Caco-2 (cell line): ENCODE measurements at regions of chr20 and their contacts with region 1.

Region 1: GRCh38 chr20:62900052-62900691 is 26.1 kb downstream of the DIDO1 start:
- DNase-seq: peak; percentile 87 to 92
- H3K4me3 ChIP-seq: no peak overlapping the region
- H3K4me3 Mint-ChIP-seq: peak overlapping the region; percentile 28
- H3K27ac Mint-ChIP-seq: peak overlapping the region; percentile 82
- H3K4me1 ChIP-seq: peaks cover 13% of the 10 kb centered on the region
- H3K4me1 Mint-ChIP-seq: peaks cover 28% of the 10 kb centered on the region
- H3K27me3 ChIP-seq: no peaks in the 10 kb centered on the region
- H3K27me3 Mint-ChIP-seq: no peaks in the 10 kb centered on the region
- CTCF ChIP-seq: peak; percentile 99 to 100

Region 2: GRCh38 chr20:62815066-62815991 is 84.8 kb before region 1 on chr20:
- CTCF ChIA-PET with region 1: no interaction called
- POLR2A ChIA-PET with region 1: no interaction called
- intact Hi-C with region 1: no loop called
- DNase-seq: peak; percentile 62 to 82
- H3K4me3 ChIP-seq: no peak overlapping the region
- H3K4me3 Mint-ChIP-seq: peak overlapping the region; percentile 52
- H3K27ac Mint-ChIP-seq: peak overlapping the region; percentile 33
- H3K4me1 ChIP-seq: peaks cover 23% of the 10 kb centered on the region
- H3K4me1 Mint-ChIP-seq: peaks cover 11% of the 10 kb centered on the region
- H3K27me3 ChIP-seq: no peaks in the 10 kb centered on the region
- H3K27me3 Mint-ChIP-seq: no peaks in the 10 kb centered on the region
- CTCF ChIP-seq: no peak

Region 3: GRCh38 chr20:62879275-62880146 is 20.7 kb before region 1 on chr20:
- CTCF ChIA-PET with region 1: no interaction called
- POLR2A ChIA-PET with region 1: no interaction called
- intact Hi-C with region 1: no loop called
- DNase-seq: no peak
- H3K4me3 ChIP-seq: no peak overlapping the region
- H3K4me3 Mint-ChIP-seq: no peak overlapping the region
- H3K27ac Mint-ChIP-seq: no peak overlapping the region
- H3K4me1 ChIP-seq: peaks cover 3% of the 10 kb centered on the region
- H3K4me1 Mint-ChIP-seq: peaks cover 16% of the 10 kb centered on the region
- H3K27me3 ChIP-seq: no peaks in the 10 kb centered on the region
- H3K27me3 Mint-ChIP-seq: no peaks in the 10 kb centered on the region
- CTCF ChIP-seq: no peak

Region 4: GRCh38 chr20:62914436-62914835 is 14.3 kb after region 1 on chr20:
- CTCF ChIA-PET with region 1: interaction called, 13 read pairs
- POLR2A ChIA-PET with region 1: no interaction called
- intact Hi-C with region 1: no loop called
- DNase-seq: peak in 1 of 2 experiments; percentile 35
- H3K4me3 ChIP-seq: no peak overlapping the region
- H3K4me3 Mint-ChIP-seq: no peak overlapping the region
- H3K27ac Mint-ChIP-seq: peak overlapping the region; percentile 87
- H3K4me1 ChIP-seq: peaks cover 54% of the 10 kb centered on the region
- H3K4me1 Mint-ChIP-seq: peaks cover 45% of the 10 kb centered on the region
- H3K27me3 ChIP-seq: no peaks in the 10 kb centered on the region
- H3K27me3 Mint-ChIP-seq: no peaks in the 10 kb centered on the region
- CTCF ChIP-seq: no peak

Region 5: GRCh38 chr20:62921119-62921687 is 21.0 kb after region 1 on chr20:
- CTCF ChIA-PET with region 1: interaction called, 6 read pairs
- POLR2A ChIA-PET with region 1: no interaction called
- intact Hi-C with region 1: loop called (anchors 1 kb)
- DNase-seq: peak; percentile 83 to 84
- H3K4me3 ChIP-seq: no peak overlapping the region
- H3K4me3 Mint-ChIP-seq: no peak overlapping the region
- H3K27ac Mint-ChIP-seq: peak overlapping the region; percentile 49
- H3K4me1 ChIP-seq: peaks cover 57% of the 10 kb centered on the region
- H3K4me1 Mint-ChIP-seq: peaks cover 69% of the 10 kb centered on the region
- H3K27me3 ChIP-seq: no peaks in the 10 kb centered on the region
- H3K27me3 Mint-ChIP-seq: no peaks in the 10 kb centered on the region
- CTCF ChIP-seq: peak; percentile 69 to 82

Region 6: DNA sequence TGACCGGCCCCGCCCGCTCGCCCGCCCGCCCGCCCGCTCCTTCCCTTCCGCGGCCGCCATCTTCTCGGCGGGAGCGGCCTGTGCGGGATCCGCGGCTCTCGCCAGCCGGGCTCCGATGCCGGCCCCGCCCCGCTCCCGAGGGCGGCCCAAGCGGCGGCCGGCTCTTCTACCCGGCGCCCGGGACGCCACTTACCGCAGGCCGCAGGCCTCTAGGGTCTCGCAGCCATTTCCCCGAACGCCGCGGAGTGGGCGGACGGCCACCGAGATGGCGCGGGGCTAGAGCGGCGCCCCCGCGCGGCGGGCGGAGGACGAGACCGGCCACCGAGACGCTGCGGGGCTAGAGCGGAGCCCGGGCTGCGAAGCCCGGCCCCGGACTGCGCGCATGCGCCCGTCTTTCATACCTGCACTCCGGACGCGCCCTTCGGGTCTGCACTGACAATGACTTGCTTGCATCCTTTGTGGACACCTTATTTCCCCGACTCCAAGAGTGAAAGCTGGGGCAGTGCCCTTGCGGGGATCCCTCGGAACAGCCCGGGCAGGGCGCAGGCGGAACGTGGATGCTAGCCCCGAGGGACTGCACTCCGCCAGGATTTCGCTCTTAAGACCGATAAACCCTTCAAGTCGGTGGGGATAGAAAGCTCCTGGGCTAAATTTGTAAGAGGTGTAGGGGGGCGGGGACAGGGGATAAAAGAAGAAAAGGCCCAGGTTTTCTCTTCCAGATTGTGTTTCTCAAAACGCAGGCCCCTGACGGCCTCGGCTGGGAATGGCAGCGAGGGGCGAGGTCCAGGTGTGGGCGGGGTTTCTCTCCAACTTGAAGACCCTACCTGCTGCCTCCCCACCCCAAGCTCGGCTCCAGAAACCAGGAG is 26.3 kb after region 1 on chr20 and contains the start of gene DIDO1:
- CTCF ChIA-PET with region 1: no interaction called
- POLR2A ChIA-PET with region 1: no interaction called
- intact Hi-C with region 1: loop called (anchors 1 kb)
- DNase-seq: peak; percentile 96 to 99
- H3K4me3 ChIP-seq: peak within 1 kb of the TSS; percentile 99
- H3K4me3 Mint-ChIP-seq: peak within 1 kb of the TSS; percentile 93
- H3K27ac Mint-ChIP-seq: peak within 1 kb of the TSS; percentile 95
- H3K4me1 ChIP-seq: peaks cover 31% of the 10 kb centered on the region
- H3K4me1 Mint-ChIP-seq: peaks cover 37% of the 10 kb centered on the region
- H3K27me3 ChIP-seq: no peaks in the 10 kb centered on the region
- H3K27me3 Mint-ChIP-seq: no peaks in the 10 kb centered on the region
- CTCF ChIP-seq: peak; percentile 69 to 93
- total RNA-seq, gene DIDO1: 120 and 122 TPM in 2 replicates

Region 7: GRCh38 chr20:62937366-62938104 is 37.4 kb after region 1 on chr20:
- CTCF ChIA-PET with region 1: no interaction called
- POLR2A ChIA-PET with region 1: no interaction called
- intact Hi-C with region 1: loop called (anchors 1 kb)
- DNase-seq: peak; percentile 99 to 100
- H3K4me3 ChIP-seq: peak overlapping the region; percentile 81
- H3K4me3 Mint-ChIP-seq: no peak overlapping the region
- H3K27ac Mint-ChIP-seq: peak overlapping the region; percentile 95
- H3K4me1 ChIP-seq: peaks cover 26% of the 10 kb centered on the region
- H3K4me1 Mint-ChIP-seq: peaks cover 8% of the 10 kb centered on the region
- H3K27me3 ChIP-seq: no peaks in the 10 kb centered on the region
- H3K27me3 Mint-ChIP-seq: no peaks in the 10 kb centered on the region
- CTCF ChIP-seq: no peak

Region 8: GRCh38 chr20:63009045-63009961 is 109.1 kb after region 1 on chr20:
- CTCF ChIA-PET with region 1: interaction called, 8 read pairs
- POLR2A ChIA-PET with region 1: no interaction called
- intact Hi-C with region 1: loop called (anchors 1 kb)
- DNase-seq: peak; percentile 89 to 96
- H3K4me3 ChIP-seq: peak overlapping the region; percentile 27
- H3K4me3 Mint-ChIP-seq: peak overlapping the region; percentile 66
- H3K27ac Mint-ChIP-seq: peak overlapping the region; percentile 89
- H3K4me1 ChIP-seq: peaks cover 24% of the 10 kb centered on the region
- H3K4me1 Mint-ChIP-seq: peaks cover 27% of the 10 kb centered on the region
- H3K27me3 ChIP-seq: no peaks in the 10 kb centered on the region
- H3K27me3 Mint-ChIP-seq: no peaks in the 10 kb centered on the region
- CTCF ChIP-seq: peak; percentile 99 to 100